ENCODE measurements at regions of chr16 and their contacts with region 1.

Region 1: DNA sequence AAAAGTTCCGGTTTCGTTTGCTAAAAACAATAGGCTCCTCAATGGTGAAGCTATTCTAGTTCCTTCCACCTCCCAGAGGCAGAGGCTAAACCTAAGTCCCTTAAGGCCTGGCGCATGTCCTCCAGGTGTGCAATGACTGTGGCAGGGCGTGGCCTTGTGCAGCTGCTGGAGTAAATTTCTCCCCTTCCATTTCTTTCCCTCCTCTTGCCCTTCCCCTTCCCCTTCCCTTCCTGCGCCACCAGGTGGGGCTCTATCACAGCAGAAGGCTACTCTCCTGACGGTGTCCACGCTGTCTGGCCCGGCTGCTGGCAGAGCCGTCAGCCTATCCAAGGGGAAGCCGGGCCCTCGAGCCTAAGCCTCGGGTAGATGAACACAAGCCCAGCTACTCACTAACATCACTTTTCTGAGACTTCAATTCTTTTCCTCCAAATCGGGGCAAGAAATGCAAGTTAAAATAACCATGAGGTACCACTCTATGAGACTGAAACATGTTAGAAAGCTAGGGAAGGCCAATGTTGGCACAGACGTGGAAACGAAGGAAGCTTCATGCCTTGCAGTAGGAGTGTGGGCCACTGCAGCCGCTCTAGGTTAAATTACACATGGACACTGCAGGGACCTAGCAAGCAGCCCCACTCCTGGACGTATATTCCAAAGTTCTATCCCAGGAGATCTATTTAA is 34.4 kb downstream of the C16orf78 start:
- DNase-seq: peak; percentile 90
- ATAC-seq: peak; percentile 100

Region 2: GRCh38 chr16:49213594-49213993 is 194.4 kb before region 1 on chr16:
- intact Hi-C with region 1: no loop called
- DNase-seq: no peak
- ATAC-seq: no peak

Region 3: GRCh38 chr16:49287572-49287971 is 120.4 kb before region 1 on chr16:
- intact Hi-C with region 1: no loop called
- DNase-seq: no peak
- ATAC-seq: no peak

Region 4: DNA sequence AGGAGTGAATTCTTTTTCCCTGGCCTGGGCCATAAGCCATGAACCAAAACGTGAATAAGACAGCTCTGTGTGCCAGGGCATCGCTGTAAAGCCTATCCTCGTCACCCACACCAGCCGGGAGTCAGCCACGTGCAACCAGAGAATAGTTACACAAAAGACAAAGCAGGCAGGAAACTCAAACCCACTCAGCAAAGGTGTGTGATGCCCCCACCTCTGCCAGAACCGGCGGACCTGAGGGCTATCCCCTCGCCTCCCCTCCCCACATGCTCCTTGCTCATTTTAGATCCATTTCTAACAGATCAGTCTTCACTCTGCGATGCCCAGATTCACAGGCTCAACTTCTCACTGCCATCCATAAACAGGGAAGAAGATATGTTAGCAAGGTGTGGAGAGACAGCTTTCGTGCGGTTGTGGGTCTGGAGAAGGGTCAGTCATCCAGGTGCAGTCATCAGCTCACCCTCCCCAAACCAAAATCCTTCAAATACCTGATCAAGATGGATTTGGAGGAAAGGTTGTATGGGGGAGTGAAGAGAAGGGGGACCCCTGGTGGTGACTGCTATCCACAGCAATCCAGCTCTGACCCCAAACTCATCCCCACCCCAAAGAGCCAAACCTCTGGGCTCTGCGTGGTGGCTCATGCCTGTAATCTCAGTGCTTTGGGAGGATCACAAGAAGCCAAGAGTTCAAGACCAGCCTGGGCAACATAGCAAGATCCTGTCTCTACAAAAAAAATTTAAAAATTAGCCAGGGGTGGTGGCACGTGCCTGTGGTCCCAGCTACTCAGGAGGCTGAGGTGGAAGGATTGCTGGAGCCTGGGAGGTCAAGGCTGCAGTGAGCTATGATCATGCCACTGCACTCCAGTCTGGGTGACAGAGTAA is 184.8 kb after region 1 on chr16:
- intact Hi-C with region 1: loop called (anchors 10 kb)
- DNase-seq: no peak
- ATAC-seq: peak; percentile 70

Region 5: DNA sequence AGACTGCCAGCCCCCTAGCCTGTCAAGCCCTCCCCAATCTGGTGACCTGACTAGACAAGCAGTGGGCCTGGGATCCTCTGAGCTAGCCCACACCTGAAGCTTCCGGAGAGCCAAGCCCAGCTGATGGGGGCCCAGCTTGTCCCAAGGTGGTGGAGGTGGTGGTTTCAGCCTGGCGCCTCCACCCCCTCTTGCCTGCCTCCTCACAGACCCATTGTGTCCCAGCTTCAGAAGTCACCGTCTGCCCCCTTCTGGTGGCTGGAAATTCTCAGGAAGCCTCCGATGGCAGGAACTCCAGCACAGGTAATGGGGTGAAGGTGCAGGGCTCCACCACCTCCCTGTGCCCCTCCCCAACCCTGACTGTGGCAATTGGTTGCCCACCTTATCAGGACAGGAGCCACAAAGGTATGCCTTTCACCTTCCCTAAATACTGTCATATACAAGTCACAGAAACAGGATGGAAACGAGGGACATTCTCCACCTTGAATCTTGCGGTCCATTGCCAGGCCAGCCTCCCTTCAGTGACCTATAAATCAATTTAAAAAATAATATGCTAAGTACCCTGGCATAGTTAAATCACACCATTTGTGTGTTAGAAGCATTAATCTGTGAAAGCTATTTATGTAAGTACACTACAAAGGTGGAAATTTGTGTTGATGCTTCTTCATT is 513.9 kb after region 1 on chr16:
- intact Hi-C with region 1: loop called (anchors 5 kb)
- DNase-seq: peak; percentile 60
- ATAC-seq: peak; percentile 89

Measured in Right ventricle myocardium superior (tissue), 1 donor.